GM10248 (cell line): ENCODE measurements at regions of chr11 and their contacts with region 1.

Region 1: GRCh38 chr11:68798221-68798813 is 43.4 kb downstream of the CPT1A start:
- DNase-seq: peak; percentile 61
- CTCF ChIP-seq: peak; percentile 54

Region 2: DNA sequence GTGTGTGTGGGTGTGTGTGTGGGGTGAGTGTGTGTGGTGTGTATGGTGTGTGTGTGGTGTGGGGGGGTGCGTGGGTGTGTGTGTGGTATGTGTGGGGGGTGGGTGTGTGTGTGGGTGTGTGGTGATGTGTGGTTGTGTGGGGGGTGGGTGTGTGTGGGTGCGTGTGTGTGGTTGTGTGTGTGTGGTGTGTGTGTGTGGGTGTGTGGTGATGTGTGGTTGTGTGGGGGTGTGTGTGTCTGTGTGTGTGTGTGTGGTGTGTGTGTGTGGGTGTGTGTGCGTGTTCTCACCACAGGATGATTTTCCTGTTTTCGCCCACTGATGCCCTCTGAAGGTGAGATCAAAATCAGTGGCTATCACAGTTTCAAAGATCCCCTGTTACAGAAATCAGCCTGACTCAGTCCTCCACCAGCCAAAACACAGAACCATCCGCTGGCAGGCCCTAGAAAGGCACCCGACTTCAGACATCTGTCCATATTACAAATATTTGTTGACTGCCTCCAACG is 18.7 kb after region 1 on chr11:
- CTCF ChIA-PET with region 1: interaction called, 10 read pairs
- POLR2A ChIA-PET with region 1: no interaction called
- DNase-seq: no peak
- CTCF ChIP-seq: no peak